ENCODE measurements at regions of chr17 and their contacts with region 1.

Region 1: GRCh38 chr17:43846221-43846712 is 709 bp upstream of the CD300LG start:
- DNase-seq: peak; percentile 83 to 95
- H3K4me3 ChIP-seq: no peak overlapping the region
- H3K4me3 Mint-ChIP-seq: no peak overlapping the region
- H3K27ac Mint-ChIP-seq: no peak overlapping the region
- H3K4me1 ChIP-seq: peaks cover 10% of the 10 kb centered on the region; the same call in 1 of the 2 replicates
- H3K4me1 Mint-ChIP-seq: peaks cover 15% of the 10 kb centered on the region
- H3K27me3 ChIP-seq: no peaks in the 10 kb centered on the region
- H3K27me3 Mint-ChIP-seq: peaks cover 12% of the 10 kb centered on the region
- CTCF ChIP-seq: peak; percentile 98

Region 2: GRCh38 chr17:43694077-43694870 is 152.0 kb before region 1 on chr17:
- CTCF ChIA-PET with region 1: interaction called, 6 read pairs
- POLR2A ChIA-PET with region 1: no interaction called
- intact Hi-C with region 1: loop called (anchors 1 kb)
- DNase-seq: peak; percentile 85 to 88
- H3K4me3 ChIP-seq: no peak overlapping the region
- H3K4me3 Mint-ChIP-seq: peak overlapping the region; percentile 57
- H3K27ac Mint-ChIP-seq: no peak overlapping the region
- H3K4me1 ChIP-seq: no peaks in the 10 kb centered on the region
- H3K4me1 Mint-ChIP-seq: peaks cover 6% of the 10 kb centered on the region
- H3K27me3 ChIP-seq: no peaks in the 10 kb centered on the region
- H3K27me3 Mint-ChIP-seq: no peaks in the 10 kb centered on the region
- CTCF ChIP-seq: peak; percentile 87 to 96

Region 3: GRCh38 chr17:43766413-43767052 is 79.7 kb before region 1 on chr17:
- CTCF ChIA-PET with region 1: interaction called, 19 read pairs
- POLR2A ChIA-PET with region 1: no interaction called
- intact Hi-C with region 1: no loop called
- DNase-seq: peak in 1 of 2 experiments; percentile 72
- H3K4me3 ChIP-seq: no peak overlapping the region
- H3K4me3 Mint-ChIP-seq: no peak overlapping the region
- H3K27ac Mint-ChIP-seq: no peak overlapping the region
- H3K4me1 ChIP-seq: no peaks in the 10 kb centered on the region
- H3K4me1 Mint-ChIP-seq: no peaks in the 10 kb centered on the region
- H3K27me3 ChIP-seq: no peaks in the 10 kb centered on the region
- H3K27me3 Mint-ChIP-seq: no peaks in the 10 kb centered on the region
- CTCF ChIP-seq: peak; percentile 88 to 90

Region 4: GRCh38 chr17:43778337-43779144 is 67.7 kb before region 1 on chr17 and contains the start of gene DUSP3:
- CTCF ChIA-PET with region 1: interaction called, 15 read pairs
- POLR2A ChIA-PET with region 1: interaction called, 20 read pairs
- intact Hi-C with region 1: loop called (anchors 1 kb)
- DNase-seq: peak; percentile 98
- H3K4me3 ChIP-seq: peak within 1 kb of the TSS; percentile 98
- H3K4me3 Mint-ChIP-seq: peak within 1 kb of the TSS; percentile 77
- H3K27ac Mint-ChIP-seq: peak within 1 kb of the TSS; percentile 97
- H3K4me1 ChIP-seq: peaks cover 28% of the 10 kb centered on the region
- H3K4me1 Mint-ChIP-seq: peaks cover 29% of the 10 kb centered on the region
- H3K27me3 ChIP-seq: no peaks in the 10 kb centered on the region
- H3K27me3 Mint-ChIP-seq: no peaks in the 10 kb centered on the region
- CTCF ChIP-seq: no peak
- total RNA-seq, gene DUSP3: 78.8 and 86.3 TPM in 2 replicates

Region 5: GRCh38 chr17:43817826-43818225 is 28.4 kb before region 1 on chr17:
- CTCF ChIA-PET with region 1: interaction called, 11 read pairs
- POLR2A ChIA-PET with region 1: no interaction called
- intact Hi-C with region 1: no loop called
- DNase-seq: no peak
- H3K4me3 ChIP-seq: no peak overlapping the region
- H3K4me3 Mint-ChIP-seq: no peak overlapping the region
- H3K27ac Mint-ChIP-seq: no peak overlapping the region
- H3K4me1 ChIP-seq: peaks cover 6% of the 10 kb centered on the region; the same call in 1 of the 2 replicates
- H3K4me1 Mint-ChIP-seq: peaks cover 8% of the 10 kb centered on the region
- H3K27me3 ChIP-seq: no peaks in the 10 kb centered on the region
- H3K27me3 Mint-ChIP-seq: no peaks in the 10 kb centered on the region
- CTCF ChIP-seq: no peak